Heart left ventricle (tissue), 16 donors: ENCODE measurements at regions of chr22 and their contacts with region 1.

Region 1: GRCh38 chr22:20205964-20206708 is 55.3 kb upstream of the CCDC188 start:
- DNase-seq: peak; percentile 74 to 78 (median 78)
- ATAC-seq: peak; percentile 54 to 89 (median 77)
- H3K4me3 ChIP-seq: peak overlapping the region; percentile 32 to 85 (median 66)
- H3K27ac ChIP-seq: peak overlapping the region; percentile 69 to 91 (median 81)
- H3K4me1 ChIP-seq: peaks cover 0 to 57% (median 42%) of the 10 kb centered on the region in 12 donors
- H3K27me3 ChIP-seq: peaks cover 0 to 3% (median 0%) of the 10 kb centered on the region in 9 donors
- CTCF ChIP-seq: peak in 1 of 12 donors; percentile 23
- POLR2A ChIP-seq: peak in 1 of 2 donors; percentile 20

Region 2: DNA sequence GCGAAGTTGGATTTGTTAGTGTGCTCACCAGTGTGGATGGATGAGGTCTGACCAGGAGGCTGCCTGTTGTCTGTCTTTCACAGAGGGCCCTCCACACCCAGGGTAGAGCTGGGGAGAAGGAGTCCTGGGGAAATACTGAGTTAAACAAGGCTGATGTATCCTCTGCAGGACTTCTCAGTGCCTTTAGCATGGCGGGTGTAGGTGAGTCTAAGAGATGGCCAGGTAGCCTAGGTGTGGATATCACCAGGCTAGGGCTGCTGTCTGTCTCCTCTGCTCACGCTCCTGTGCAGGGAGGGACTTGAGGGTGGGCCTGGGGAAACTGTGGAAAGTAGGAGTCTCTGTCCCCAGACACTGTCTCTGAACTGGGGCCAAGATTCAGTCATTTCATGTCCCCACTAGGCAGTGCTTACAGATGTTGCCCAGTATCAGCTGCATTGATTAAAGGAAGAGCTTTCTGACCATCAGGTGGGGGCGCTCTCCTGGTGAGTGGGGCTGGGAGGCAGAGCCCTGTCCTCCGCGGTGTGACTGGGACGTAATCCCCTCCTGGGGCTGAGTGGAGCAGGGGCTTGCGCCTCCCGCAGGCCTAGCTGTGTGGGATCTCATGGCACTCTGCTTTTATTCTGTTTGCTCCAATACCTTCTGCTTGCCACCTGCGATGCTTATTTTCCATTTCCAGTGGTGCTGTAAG is 19.8 kb before region 1 on chr22:
- intact Hi-C with region 1: loop called in 1 of 10 experiments (anchors 2 kb)
- DNase-seq: no peak
- ATAC-seq: no peak
- H3K4me3 ChIP-seq: no peak overlapping the region
- H3K27ac ChIP-seq: no peak overlapping the region
- H3K4me1 ChIP-seq: no peaks in the 10 kb centered on the region
- H3K27me3 ChIP-seq: peaks cover 0 to 7% (median 0%) of the 10 kb centered on the region in 9 donors
- CTCF ChIP-seq: peak in 1 of 12 donors; percentile 13
- POLR2A ChIP-seq: no peak

Region 3: DNA sequence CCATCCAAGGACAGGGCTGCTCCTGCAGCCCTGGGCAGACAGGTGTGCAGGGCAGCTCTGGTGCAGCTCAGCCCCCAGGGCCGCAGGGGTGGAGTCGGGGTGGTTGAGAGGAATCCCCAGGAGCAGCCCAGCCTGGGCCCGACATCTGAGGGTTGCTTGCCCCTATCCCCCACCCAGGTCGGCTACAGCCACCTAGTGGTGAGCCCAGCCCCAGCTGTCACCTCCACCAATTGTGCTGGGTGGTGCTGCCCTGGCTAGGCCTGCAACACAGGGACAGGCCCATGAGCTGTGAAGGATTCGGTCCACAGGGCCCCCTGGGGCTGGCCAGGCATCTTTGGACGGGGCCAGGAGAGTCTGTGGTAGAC is 32.4 kb after region 1 on chr22:
- intact Hi-C with region 1: loop called in 3 of 10 experiments (anchors 1 to 2 kb)
- DNase-seq: peak; percentile 45 to 80 (median 55)
- ATAC-seq: peak; percentile 49 to 75 (median 54)
- H3K4me3 ChIP-seq: peak overlapping the region in 3 of 12 donors; percentile 7 to 22 (median 18)
- H3K27ac ChIP-seq: peak overlapping the region; percentile 52 to 94 (median 83)
- H3K4me1 ChIP-seq: peaks cover 8 to 50% (median 43%) of the 10 kb centered on the region in 12 donors
- H3K27me3 ChIP-seq: no peaks in the 10 kb centered on the region
- CTCF ChIP-seq: peak; percentile 23 to 70 (median 56)
- POLR2A ChIP-seq: no peak

Region 4: GRCh38 chr22:20243537-20244249 is 37.6 kb after region 1 on chr22:
- intact Hi-C with region 1: loop called in 3 of 10 experiments (anchors 1 to 2 kb)
- DNase-seq: peak; percentile 84 to 86 (median 85)
- ATAC-seq: peak; percentile 72 to 84 (median 74)
- H3K4me3 ChIP-seq: peak overlapping the region in 9 of 12 donors; percentile 15 to 38 (median 24)
- H3K27ac ChIP-seq: peak overlapping the region in 9 of 12 donors; percentile 47 to 72 (median 55)
- H3K4me1 ChIP-seq: peaks cover 8 to 75% (median 52%) of the 10 kb centered on the region in 12 donors
- H3K27me3 ChIP-seq: no peaks in the 10 kb centered on the region
- CTCF ChIP-seq: no peak
- POLR2A ChIP-seq: peak in 1 of 2 donors; percentile 22

Region 5: GRCh38 chr22:20380486-20380885 is 174.3 kb after region 1 on chr22:
- intact Hi-C with region 1: no loop called
- DNase-seq: no peak
- ATAC-seq: no peak
- H3K4me3 ChIP-seq: no peak overlapping the region
- H3K27ac ChIP-seq: no peak overlapping the region
- H3K4me1 ChIP-seq: no peaks in the 10 kb centered on the region
- H3K27me3 ChIP-seq: peaks cover 0 to 12% (median 2%) of the 10 kb centered on the region in 9 donors
- CTCF ChIP-seq: no peak
- POLR2A ChIP-seq: no peak